Heart right ventricle (tissue), 16 donors: ENCODE measurements at regions of chr19 and their contacts with region 1.

Region 1: GRCh38 chr19:55503502-55504251 is 15.4 kb downstream of the SSC5D start:
- DNase-seq: peak; percentile 92 to 96
- ATAC-seq: peak; percentile 96 to 99 (median 98)
- H3K4me3 ChIP-seq: peak overlapping the region in 9 of 10 donors; percentile 14 to 62 (median 53)
- H3K27ac ChIP-seq: peak overlapping the region in 9 of 10 donors; percentile 42 to 86 (median 57)
- H3K4me1 ChIP-seq: peaks cover 0 to 14% (median 3%) of the 10 kb centered on the region in 9 donors
- H3K27me3 ChIP-seq: no peaks in the 10 kb centered on the region
- CTCF ChIP-seq: peak; percentile 98 to 100 (median 99)

Region 2: GRCh38 chr19:55261671-55262126 is 242.0 kb before region 1 on chr19:
- intact Hi-C with region 1: no loop called
- DNase-seq: no peak
- ATAC-seq: no peak
- H3K4me3 ChIP-seq: no peak overlapping the region
- H3K27ac ChIP-seq: no peak overlapping the region
- H3K4me1 ChIP-seq: peaks cover 4 to 24% (median 23%) of the 10 kb centered on the region in 9 donors
- H3K27me3 ChIP-seq: no peaks in the 10 kb centered on the region
- CTCF ChIP-seq: no peak

Region 3: GRCh38 chr19:55467236-55468053 is 36.2 kb before region 1 on chr19:
- intact Hi-C with region 1: loop called (anchors 1 to 5 kb)
- DNase-seq: peak; percentile 57 to 80
- ATAC-seq: peak; percentile 77 to 96 (median 88)
- H3K4me3 ChIP-seq: no peak overlapping the region
- H3K27ac ChIP-seq: peak overlapping the region in 1 of 10 donors; percentile 15
- H3K4me1 ChIP-seq: peaks cover 0 to 13% (median 8%) of the 10 kb centered on the region in 9 donors
- H3K27me3 ChIP-seq: no peaks in the 10 kb centered on the region
- CTCF ChIP-seq: peak; percentile 99 to 100 (median 99)